ENCODE measurements at regions of chr21 and their contacts with region 1.

Region 1: DNA sequence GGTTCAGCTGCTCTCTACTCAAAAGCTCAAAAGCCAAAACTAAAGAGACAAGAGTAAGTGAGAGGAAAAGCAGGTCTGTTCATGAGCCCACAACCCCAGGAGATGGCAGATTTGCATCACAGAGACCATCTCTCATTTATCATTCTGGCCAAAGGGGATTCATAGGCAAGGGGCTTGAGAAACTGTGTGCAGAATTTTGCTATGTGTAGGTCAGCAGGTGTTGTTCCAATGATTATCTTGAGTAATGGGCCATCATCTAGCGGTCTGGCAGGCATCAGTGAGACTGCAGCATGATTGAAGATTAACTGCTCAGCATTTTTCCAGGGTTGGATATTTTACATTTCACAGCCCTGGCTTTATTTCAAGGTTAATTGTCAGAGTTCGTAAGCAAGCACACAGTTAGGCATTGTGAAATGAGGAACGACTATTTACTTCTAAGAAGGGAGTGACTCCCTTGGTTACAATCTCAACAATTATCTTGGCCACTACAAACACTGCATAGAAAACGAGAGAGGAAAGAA is 1204.6 kb upstream of the TMPRSS15 start:
- DNase-seq: no peak
- H3K4me3 ChIP-seq: no peak overlapping the region
- H3K27ac ChIP-seq: no peak overlapping the region
- H3K4me1 ChIP-seq: no peaks in the 10 kb centered on the region
- H3K27me3 ChIP-seq: no peaks in the 10 kb centered on the region
- CTCF ChIP-seq: no peak
- EP300 ChIP-seq: no peak
- POLR2A ChIP-seq: no peak

Region 2: DNA sequence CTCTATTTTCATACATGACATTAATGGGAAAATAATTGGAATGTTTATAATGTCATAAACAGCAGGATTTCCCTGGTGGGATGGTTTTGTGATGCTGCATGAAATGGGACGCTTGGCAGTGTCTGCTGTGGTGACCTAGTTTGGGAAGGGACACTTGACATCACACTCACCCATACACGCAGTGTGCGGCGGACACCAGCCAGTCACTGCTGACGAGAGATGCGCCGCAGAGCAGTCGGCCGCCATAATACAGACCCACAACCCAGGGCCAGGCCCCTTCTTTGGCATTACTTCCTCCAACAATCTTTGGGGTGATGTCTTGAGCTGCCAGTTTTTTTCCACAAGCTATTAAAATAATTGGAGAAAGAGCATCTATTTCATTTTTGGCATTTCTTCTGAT is 1314.1 kb before region 1 on chr21:
- in situ Hi-C with region 1: no loop called
- intact Hi-C with region 1: loop called (anchors 5 kb)
- DNase-seq: no peak
- H3K4me3 ChIP-seq: no peak overlapping the region
- H3K27ac ChIP-seq: no peak overlapping the region
- H3K4me1 ChIP-seq: no peaks in the 10 kb centered on the region
- H3K27me3 ChIP-seq: no peaks in the 10 kb centered on the region
- CTCF ChIP-seq: no peak
- EP300 ChIP-seq: no peak
- POLR2A ChIP-seq: no peak

Region 3: DNA sequence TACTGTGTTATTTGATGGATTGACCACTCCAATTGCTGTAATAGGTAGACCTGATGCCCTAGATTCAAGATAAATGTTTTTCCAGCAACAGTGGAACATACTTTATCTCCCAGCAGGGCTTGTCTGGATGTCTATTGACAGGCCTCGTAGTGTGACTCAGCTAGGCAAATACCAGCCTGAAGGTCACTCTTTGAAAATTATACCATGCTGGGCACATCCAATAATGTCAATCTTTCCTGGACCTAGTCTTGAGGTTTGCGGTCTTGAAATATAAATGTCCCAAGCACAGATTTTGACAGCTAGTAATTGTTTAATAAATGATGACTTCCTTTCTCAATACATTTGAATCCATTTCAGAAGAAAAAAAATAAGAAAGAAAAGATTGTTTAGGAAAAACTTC is 66.6 kb before region 1 on chr21:
- in situ Hi-C with region 1: no loop called
- intact Hi-C with region 1: no loop called
- DNase-seq: no peak
- H3K4me3 ChIP-seq: no peak overlapping the region
- H3K27ac ChIP-seq: no peak overlapping the region
- H3K4me1 ChIP-seq: no peaks in the 10 kb centered on the region
- H3K27me3 ChIP-seq: no peaks in the 10 kb centered on the region
- CTCF ChIP-seq: no peak
- EP300 ChIP-seq: no peak
- POLR2A ChIP-seq: no peak

Region 4: DNA sequence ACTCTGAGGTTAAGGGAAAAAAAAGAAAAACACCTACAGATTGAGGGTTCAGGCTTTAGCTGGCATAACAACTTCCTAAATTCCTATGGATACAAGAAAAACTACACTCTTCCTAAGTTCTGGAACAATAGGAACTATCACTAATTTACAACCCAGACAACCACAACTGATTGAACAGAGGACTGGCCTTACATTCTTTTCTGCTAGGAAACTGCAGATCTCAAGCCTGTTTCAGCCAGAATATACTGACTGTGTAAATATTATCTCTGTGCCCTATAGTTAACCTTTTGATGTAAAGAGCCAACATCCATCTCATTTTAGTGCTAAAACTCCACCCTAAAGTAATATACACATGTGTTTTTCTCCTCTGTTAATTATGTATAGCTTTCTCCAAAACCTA is 18.1 kb before region 1 on chr21:
- in situ Hi-C with region 1: no loop called
- intact Hi-C with region 1: loop called (anchors 2 kb)
- DNase-seq: no peak
- H3K4me3 ChIP-seq: no peak overlapping the region
- H3K27ac ChIP-seq: no peak overlapping the region
- H3K4me1 ChIP-seq: peaks cover 0 to 3% (median 0%) of the 10 kb centered on the region in 4 donors
- H3K27me3 ChIP-seq: no peaks in the 10 kb centered on the region
- CTCF ChIP-seq: no peak
- EP300 ChIP-seq: no peak
- POLR2A ChIP-seq: no peak